RWPE1 (cell line): ENCODE measurements at regions of chr11 and their contacts with region 1.

Region 1: GRCh38 chr11:73787643-73788537 is at the start of gene MRPL48:
- DNase-seq: peak; percentile 95
- H3K27ac ChIP-seq: peak within 1 kb of the TSS; percentile 97
- CTCF ChIP-seq: no peak

Region 2: DNA sequence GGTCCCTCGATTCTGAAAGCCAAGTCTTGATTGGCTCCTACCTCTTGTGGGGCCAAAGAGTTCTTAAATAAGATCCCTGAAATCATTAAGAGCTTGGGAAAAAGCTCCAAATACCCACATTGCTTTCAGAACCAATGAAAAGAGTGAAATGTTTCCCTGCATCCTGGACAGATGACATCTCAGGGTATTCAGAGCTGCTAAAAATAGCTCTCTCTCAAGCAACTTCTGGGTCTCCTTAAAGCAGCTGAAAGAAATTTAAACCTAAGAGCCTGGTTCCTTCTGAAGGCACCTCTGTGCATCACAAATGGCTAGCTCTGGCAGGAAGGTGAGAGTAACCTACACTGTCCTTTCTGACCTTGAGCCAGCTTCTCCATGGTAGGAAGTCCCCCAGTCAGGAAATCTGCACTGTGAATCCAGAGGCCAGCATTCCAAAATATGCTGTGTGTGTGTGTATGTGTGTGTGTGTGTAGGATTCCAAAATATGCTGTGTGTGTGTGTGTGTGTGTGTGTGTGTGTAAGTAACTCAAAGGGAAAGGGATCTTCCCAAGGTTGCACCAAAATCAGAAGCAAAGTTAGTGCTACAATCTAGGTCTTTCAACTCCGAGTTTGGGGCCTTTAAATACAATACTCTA is 361.6 kb before region 1 on chr11:
- CTCF ChIA-PET with region 1: no interaction called
- POLR2A ChIA-PET with region 1: interaction called, 10 read pairs
- DNase-seq: no peak
- H3K27ac ChIP-seq: no peak overlapping the region
- CTCF ChIP-seq: no peak